Posterior cingulate gyrus (tissue), 11 donors: ENCODE measurements at regions of chr1 and their contacts with region 1.

Region 1: DNA sequence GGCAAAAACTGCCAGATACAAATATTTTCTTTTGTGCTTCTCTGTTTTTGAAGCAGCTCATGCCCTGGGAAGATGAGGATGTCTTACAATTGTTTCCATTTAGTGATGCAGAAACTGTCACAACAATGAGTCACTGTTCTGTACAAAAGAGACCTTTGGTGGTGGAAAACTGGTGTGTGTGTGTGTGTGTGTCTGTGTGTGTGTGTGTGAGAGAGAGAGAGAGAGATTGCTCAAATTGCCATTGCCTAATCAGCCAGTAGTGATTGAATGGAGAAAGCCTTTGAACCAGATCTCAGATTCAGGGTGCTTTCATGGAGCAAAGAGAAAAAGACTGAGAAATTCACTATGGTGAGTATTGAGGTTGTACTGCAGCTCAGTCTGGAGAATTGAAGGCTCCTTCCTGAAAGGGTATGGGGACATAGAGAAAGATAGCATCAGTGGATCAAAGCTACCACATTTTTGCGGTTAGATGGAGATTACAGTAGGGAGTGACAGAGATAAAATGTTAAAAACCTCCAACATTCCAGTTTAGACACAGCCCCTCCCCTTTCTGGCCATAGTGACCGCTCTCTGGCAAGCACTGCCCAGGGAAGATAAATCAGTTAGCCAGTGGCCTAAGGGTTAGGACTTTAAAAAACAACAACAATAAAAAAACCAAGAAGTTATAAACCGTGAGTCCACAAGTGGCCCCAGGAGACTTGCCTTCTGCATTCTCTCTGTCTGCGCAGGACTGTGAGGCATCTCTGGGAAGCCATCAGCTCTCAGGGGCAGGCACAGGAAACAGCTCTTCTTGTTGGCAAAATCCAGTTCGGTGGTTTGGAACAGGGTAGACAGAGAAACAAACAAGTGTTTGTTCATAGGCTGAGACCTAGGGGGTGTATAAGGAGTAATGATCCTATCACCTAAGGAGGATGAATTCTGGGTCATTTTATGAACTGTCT is 406.5 kb downstream of the DUSP10 start:
- DNase-seq: peak in 4 of 10 donors; percentile 8 to 67 (median 28)

Region 2: DNA sequence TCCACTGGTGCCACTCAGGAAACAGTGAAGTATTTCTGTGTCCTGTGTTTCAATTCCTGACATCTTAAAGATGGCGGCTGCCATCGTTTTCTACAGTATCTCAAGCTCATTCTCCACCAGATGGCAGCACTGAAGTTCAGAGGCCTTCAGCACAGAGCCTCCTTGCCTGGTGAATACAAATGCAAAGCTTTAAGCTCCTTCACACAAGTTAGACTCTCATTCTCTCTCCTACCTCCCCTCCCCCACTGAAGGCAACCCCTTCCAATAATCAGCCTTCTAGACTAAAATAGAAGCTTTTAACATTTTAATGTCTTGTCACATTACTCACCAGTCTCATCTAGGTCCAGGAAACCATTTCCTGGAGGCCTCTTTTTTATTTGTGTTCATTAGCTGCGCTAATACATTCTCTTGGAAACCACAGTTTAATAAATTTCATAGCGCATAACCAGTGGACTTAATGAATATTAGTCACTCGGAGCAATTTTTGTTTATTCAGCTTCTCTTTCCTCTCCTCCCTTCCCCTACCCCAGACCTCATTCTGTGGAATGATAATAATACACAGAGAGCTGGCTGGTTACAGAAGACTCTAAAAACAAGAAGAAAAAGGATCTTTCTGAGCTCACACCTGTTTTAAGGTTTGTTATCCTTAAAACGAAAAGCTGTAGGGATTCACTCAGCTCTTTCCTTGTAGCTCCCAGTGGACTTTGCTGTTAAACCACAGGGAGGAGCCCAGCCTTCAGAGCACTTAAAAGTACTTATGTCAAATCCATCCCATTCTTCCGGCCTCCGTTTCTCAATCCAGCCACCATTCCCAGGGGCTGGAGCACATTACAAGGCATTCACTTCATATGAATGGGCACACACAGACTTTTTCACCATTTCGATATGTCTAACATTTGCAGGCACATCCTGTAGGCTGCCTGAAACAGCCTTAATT is 71.3 kb before region 1 on chr1:
- intact Hi-C with region 1: loop called (anchors 5 kb)
- DNase-seq: peak in 7 of 10 donors; percentile 27 to 91 (median 64)

Region 3: DNA sequence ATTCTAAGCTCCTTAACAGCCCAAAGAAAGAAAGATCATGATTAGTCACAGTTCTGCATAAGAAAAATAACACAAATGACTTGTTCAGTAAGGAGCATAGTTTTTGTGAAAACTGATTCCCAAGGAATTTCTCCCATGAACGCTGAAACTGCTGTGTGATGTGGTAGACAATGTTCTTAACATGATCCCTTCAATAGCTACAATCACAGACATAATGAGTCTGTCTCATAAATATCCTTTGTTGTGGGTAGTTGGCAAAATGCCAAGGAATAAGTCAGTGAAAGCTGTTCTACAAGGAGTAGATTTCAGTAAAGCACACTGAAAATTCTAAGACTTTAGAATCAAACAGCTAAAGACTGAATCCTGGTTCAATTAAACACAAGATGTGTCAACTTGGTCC is 51.4 kb before region 1 on chr1:
- intact Hi-C with region 1: no loop called
- DNase-seq: no peak

Region 4: DNA sequence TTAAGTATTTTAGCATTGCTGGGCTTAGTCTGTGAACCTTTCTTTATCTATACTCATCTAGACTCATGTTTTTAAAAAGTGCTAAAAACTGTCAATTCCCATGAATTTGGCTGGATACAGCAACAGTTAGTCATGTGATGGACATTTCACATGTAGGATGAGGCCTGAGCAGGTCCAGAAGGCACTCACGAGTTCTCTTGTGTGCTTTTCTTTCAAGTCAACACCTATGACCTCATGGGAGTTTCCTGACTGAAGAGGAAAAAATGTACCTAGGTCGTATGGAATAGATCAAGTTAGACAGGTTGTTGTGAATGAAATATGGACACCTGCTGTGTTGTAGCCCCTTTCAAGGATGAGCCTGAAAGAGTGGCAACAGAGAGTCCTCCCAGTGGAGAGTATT is 12.3 kb after region 1 on chr1:
- intact Hi-C with region 1: no loop called
- DNase-seq: no peak